Naive thymus-derived CD4-positive, alpha-beta T cell (primary cell): ENCODE measurements at regions of chr1 and their contacts with region 1.

Region 1: GRCh38 chr1:183915625-183916510 is 110.9 kb downstream of the RGL1 start:
- DNase-seq: peak; percentile 16 to 80 (median 71)
- ATAC-seq: peak; percentile 96
- H3K4me3 ChIP-seq: no peak overlapping the region
- H3K4me3 Mint-ChIP-seq: peak overlapping the region in 8 of 10 donors; percentile 19 to 48 (median 38)
- H3K27ac ChIP-seq: no peak overlapping the region
- H3K27ac Mint-ChIP-seq: peak overlapping the region in 4 of 9 donors; percentile 7 to 70 (median 45)
- H3K4me1 ChIP-seq: peaks cover 0 to 5% of the 10 kb centered on the region in 2 donors
- H3K4me1 Mint-ChIP-seq: peaks cover 6 to 17% (median 8%) of the 10 kb centered on the region in 7 donors
- H3K27me3 ChIP-seq: no peaks in the 10 kb centered on the region
- H3K27me3 Mint-ChIP-seq: no peaks in the 10 kb centered on the region

Region 2: GRCh38 chr1:183543619-183544204 is 372.2 kb before region 1 on chr1:
- CTCF ChIA-PET with region 1: no interaction called
- POLR2A ChIA-PET with region 1: no interaction called
- intact Hi-C with region 1: loop called in 1 of 2 experiments (anchors 5 kb)
- DNase-seq: peak in 7 of 9 donors; percentile 34 to 61 (median 48)
- ATAC-seq: peak; percentile 91
- H3K4me3 ChIP-seq: no peak overlapping the region
- H3K4me3 Mint-ChIP-seq: no peak overlapping the region
- H3K27ac ChIP-seq: no peak overlapping the region
- H3K27ac Mint-ChIP-seq: peak overlapping the region in 6 of 9 donors; percentile 1 to 50 (median 4)
- H3K4me1 ChIP-seq: no peaks in the 10 kb centered on the region
- H3K4me1 Mint-ChIP-seq: peaks cover 4 to 13% (median 10%) of the 10 kb centered on the region in 7 donors
- H3K27me3 ChIP-seq: no peaks in the 10 kb centered on the region
- H3K27me3 Mint-ChIP-seq: no peaks in the 10 kb centered on the region

Region 3: DNA sequence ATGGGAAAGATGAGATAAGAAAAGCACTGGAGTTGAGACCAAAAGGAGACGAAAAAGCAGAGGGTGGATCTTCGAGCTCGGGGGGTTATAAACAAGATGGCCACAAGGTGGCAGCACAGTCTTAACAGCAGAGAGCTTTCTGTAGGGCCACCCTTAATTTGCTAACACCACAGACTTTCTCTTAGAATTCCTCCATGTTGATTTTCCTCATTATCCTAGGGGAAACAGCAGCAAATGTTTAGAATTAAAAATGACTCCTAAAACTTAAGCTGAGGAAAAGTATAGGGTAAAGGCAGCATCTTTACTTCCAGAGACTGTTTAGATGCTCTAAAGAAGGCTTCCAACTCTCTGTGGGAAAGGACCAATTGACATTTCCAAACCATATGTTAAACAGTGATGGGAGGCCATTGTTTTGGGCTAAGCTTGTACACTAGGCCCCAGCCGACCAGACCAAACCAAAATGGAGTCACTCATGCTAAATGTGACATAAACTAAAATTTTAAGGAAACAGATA is 260.2 kb before region 1 on chr1:
- CTCF ChIA-PET with region 1: interaction called, 130 read pairs
- POLR2A ChIA-PET with region 1: interaction called, 6 read pairs
- intact Hi-C with region 1: loop called (anchors 1 kb)
- DNase-seq: peak; percentile 43 to 74 (median 65)
- ATAC-seq: peak; percentile 88
- H3K4me3 ChIP-seq: no peak overlapping the region
- H3K4me3 Mint-ChIP-seq: no peak overlapping the region
- H3K27ac ChIP-seq: no peak overlapping the region
- H3K27ac Mint-ChIP-seq: peak overlapping the region in 3 of 9 donors; percentile 4 to 60 (median 19)
- H3K4me1 ChIP-seq: peaks cover 18 to 34% of the 10 kb centered on the region in 2 donors
- H3K4me1 Mint-ChIP-seq: peaks cover 22 to 48% (median 36%) of the 10 kb centered on the region in 7 donors
- H3K27me3 ChIP-seq: no peaks in the 10 kb centered on the region
- H3K27me3 Mint-ChIP-seq: peaks cover 0 to 5% (median 0%) of the 10 kb centered on the region in 5 donors

Region 4: DNA sequence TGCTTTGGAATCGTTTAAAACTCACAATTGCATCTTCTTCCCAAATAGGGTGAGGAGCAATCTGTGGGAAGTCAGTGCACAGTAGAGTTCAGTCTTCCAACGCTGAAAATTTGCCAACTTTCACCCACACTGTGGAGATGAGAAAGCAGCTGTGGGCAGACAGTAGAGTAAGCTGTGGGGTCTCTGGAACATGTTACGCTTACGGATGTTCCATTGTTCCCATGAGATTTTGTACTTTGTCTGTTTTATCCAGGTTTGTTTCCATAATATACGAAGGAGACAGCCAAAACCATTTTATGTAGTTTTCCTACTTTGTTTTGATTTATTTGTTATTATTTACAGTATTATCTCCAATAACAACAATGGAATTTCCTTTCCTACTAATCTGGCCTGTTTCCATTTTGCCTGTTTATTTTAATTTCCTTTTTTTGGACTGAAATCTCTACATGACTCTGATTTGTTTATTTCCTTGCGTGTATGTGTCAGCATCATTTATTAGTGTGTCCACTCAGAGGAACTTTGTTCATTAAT is 176.1 kb before region 1 on chr1:
- CTCF ChIA-PET with region 1: no interaction called
- POLR2A ChIA-PET with region 1: no interaction called
- intact Hi-C with region 1: loop called in 1 of 2 experiments (anchors 1 kb)
- DNase-seq: no peak
- ATAC-seq: no peak
- H3K4me3 ChIP-seq: no peak overlapping the region
- H3K4me3 Mint-ChIP-seq: no peak overlapping the region
- H3K27ac ChIP-seq: no peak overlapping the region
- H3K27ac Mint-ChIP-seq: no peak overlapping the region
- H3K4me1 ChIP-seq: no peaks in the 10 kb centered on the region
- H3K4me1 Mint-ChIP-seq: no peaks in the 10 kb centered on the region
- H3K27me3 ChIP-seq: no peaks in the 10 kb centered on the region
- H3K27me3 Mint-ChIP-seq: peaks cover 0 to 4% (median 0%) of the 10 kb centered on the region in 5 donors

Region 5: DNA sequence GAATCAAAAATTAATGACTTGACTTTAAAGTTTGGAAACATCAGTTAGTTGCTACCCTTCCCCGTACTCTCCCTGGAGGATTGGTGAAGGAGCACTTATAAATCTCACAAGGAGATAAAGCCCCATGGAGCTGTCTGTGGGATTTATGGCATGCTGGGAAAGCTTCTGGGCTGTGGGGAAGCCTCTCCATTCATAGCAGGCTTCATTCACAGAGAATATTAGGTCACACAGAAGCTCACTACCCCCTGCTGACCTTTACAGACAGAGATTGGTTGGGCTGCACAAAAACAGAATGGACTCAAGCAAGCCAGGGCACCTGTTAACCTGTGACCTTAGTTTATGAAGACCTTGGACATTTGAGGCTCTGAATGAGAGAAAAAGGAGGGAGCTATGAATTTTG is 78.8 kb before region 1 on chr1:
- CTCF ChIA-PET with region 1: no interaction called
- POLR2A ChIA-PET with region 1: no interaction called
- intact Hi-C with region 1: no loop called
- DNase-seq: no peak
- ATAC-seq: no peak
- H3K4me3 ChIP-seq: no peak overlapping the region
- H3K4me3 Mint-ChIP-seq: no peak overlapping the region
- H3K27ac ChIP-seq: no peak overlapping the region
- H3K27ac Mint-ChIP-seq: no peak overlapping the region
- H3K4me1 ChIP-seq: no peaks in the 10 kb centered on the region
- H3K4me1 Mint-ChIP-seq: peaks cover 0 to 13% (median 8%) of the 10 kb centered on the region in 7 donors
- H3K27me3 ChIP-seq: no peaks in the 10 kb centered on the region
- H3K27me3 Mint-ChIP-seq: no peaks in the 10 kb centered on the region

Region 6: DNA sequence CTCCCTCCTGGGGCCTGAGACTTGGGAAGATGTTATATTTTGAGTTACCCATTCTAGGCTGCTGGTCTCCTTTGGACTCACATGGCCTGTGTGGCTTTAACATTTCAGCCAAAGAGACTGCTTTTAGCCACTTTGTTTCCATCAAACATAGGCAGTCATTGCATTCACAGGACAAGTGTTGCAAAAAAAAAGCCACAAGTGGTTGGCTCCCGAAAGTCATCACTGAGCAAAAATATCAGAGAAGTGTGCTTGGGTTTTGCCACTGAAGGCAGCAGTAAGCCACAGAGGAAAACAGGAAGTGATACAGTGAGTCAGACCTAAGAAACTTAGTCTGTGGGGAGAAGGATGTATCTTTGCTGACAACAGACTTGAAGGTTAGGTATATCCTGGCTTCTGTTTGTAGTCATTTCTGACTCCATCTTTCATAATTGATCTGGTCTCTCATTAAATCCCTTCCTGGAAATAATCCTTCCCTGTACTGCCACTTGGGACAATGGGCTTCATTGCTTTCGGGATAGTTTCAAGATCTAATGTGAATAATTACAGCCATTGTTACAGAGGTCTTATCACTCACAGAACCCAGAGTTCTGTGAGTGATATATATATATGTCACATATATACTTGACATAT is 40.8 kb after region 1 on chr1:
- CTCF ChIA-PET with region 1: interaction called, 16 read pairs
- POLR2A ChIA-PET with region 1: no interaction called
- intact Hi-C with region 1: loop called (anchors 1 kb)
- DNase-seq: peak in 8 of 9 donors; percentile 60 to 82 (median 71)
- ATAC-seq: peak; percentile 99
- H3K4me3 ChIP-seq: no peak overlapping the region
- H3K4me3 Mint-ChIP-seq: peak overlapping the region in 8 of 10 donors; percentile 10 to 76 (median 30)
- H3K27ac ChIP-seq: peak overlapping the region; percentile 15
- H3K27ac Mint-ChIP-seq: no peak overlapping the region
- H3K4me1 ChIP-seq: peaks cover 17 to 36% of the 10 kb centered on the region in 2 donors
- H3K4me1 Mint-ChIP-seq: peaks cover 0 to 13% (median 9%) of the 10 kb centered on the region in 7 donors
- H3K27me3 ChIP-seq: no peaks in the 10 kb centered on the region
- H3K27me3 Mint-ChIP-seq: no peaks in the 10 kb centered on the region